B cell (primary cell): ENCODE measurements at regions of chr18 and their contacts with region 1.

Region 1: DNA sequence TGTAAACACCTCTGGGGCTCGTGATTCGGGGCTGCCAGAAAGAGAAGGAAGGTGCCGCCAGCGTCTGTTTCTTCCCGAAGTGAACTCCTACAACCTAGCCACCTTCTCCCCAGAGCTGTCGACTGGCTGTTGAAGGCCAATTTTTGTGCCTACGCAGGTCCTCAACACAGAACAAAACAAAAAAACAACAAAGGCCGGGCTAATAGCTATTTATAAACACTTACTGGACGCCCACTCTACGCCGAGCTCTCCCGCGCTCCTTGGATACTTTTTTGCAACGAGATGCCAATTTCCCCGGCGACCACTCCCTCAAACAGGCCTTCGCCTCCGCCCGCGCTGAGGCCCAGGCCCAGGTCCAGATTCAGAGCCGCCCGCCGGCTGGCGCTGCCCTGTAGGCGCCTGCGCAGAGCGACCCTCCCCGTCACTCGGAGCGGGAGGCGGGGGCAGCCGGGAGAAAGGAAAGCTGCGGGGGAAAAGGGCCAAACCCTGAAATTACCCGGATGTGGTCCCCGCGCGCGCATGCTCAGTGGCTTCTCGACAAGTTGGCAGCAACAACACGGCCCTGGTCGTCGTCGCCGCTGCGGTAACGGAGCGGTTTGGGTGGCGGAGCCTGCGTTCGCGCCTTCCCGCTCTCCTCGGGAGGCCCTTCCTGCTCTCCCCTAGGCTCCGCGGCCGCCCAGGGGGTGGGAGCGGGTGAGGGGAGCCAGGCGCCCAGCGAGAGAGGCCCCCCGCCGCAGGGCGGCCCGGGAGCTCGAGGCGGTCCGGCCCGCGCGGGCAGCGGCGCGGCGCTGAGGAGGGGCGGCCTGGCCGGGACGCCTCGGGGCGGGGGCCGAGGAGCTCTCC is at the start of gene SMAD4:
- DNase-seq: peak; percentile 97
- ATAC-seq: peak; percentile 83
- H3K4me3 ChIP-seq: peak within 1 kb of the TSS; percentile 61 to 81 (median 74)
- H3K4me3 Mint-ChIP-seq: peak within 1 kb of the TSS; percentile 97
- H3K27ac ChIP-seq: peak within 1 kb of the TSS; percentile 78 to 84
- H3K27ac Mint-ChIP-seq: peak within 1 kb of the TSS; percentile 99
- H3K4me1 ChIP-seq: peaks cover 22 to 42% of the 10 kb centered on the region in 2 donors
- H3K4me1 Mint-ChIP-seq: peaks cover 53% of the 10 kb centered on the region
- H3K27me3 ChIP-seq: no peaks in the 10 kb centered on the region
- H3K27me3 Mint-ChIP-seq: no peaks in the 10 kb centered on the region
- CTCF ChIP-seq: no peak
- total RNA-seq, gene SMAD4: 136 and 146 TPM in 2 replicates

Region 2: DNA sequence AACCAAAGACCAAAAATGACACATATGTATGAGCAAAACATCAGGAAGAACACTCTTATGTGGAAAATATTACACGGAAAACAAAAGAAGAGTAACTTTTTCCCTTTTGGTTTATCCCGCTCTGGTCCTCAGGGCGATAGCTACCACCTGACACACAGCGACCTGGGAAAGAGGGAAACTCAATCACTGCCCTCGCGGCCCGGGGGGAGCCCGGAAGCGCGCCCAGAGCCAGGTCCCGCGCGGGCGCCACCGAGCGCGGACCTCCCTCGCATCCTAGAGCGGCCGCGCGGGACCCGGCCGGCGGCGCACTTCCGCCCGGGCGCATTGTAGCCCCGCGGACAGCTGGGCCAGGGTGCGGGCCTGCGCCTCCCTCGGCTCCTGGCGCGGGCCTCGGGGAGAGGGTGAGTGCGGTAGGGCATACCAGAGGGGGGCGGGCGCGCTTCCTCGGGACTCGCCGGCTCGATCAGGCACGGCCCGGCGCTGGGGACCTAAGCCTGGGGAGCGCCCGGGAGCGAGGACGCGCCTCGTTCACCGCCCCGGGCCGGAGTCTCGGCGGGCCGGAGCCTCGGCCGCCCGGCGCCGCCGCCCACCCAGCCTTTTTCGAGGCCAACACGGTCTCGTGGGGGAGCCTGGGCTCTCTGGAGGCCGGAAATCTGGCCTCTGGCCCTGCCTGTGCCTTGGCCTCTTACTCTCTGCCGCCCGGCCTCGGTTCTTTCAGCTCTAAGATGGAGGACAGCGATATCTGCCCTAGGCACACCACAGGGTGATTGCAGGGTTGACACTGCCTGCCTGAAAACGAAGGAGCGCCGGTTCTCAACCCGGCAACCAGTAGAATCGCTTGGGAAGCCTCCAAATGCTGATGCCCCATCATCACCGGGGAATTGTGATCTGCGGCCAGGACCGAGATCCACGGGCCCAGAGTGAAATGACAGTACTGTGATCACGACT is 61.9 kb before region 1 on chr18 and contains the start of gene ELAC1:
- CTCF ChIA-PET with region 1: interaction called, 4 read pairs
- POLR2A ChIA-PET with region 1: interaction called, 8 read pairs
- intact Hi-C with region 1: loop called (anchors 1 kb)
- DNase-seq: peak; percentile 86
- ATAC-seq: peak; percentile 95
- H3K4me3 ChIP-seq: peak within 1 kb of the TSS; percentile 65 to 90 (median 82)
- H3K4me3 Mint-ChIP-seq: peak within 1 kb of the TSS; percentile 93
- H3K27ac ChIP-seq: peak within 1 kb of the TSS; percentile 80 to 95
- H3K27ac Mint-ChIP-seq: peak within 1 kb of the TSS; percentile 92
- H3K4me1 ChIP-seq: peaks cover 9 to 14% of the 10 kb centered on the region in 2 donors
- H3K4me1 Mint-ChIP-seq: peaks cover 20% of the 10 kb centered on the region
- H3K27me3 ChIP-seq: no peaks in the 10 kb centered on the region
- H3K27me3 Mint-ChIP-seq: no peaks in the 10 kb centered on the region
- CTCF ChIP-seq: no peak
- total RNA-seq, gene ELAC1: 9.9 and 10.0 TPM in 2 replicates